CD8-positive, alpha-beta T cell (primary cell): ENCODE measurements at regions of chr13 and their contacts with region 1.

Region 1: GRCh38 chr13:25971459-25972145 is 80.2 kb downstream of the SHISA2 start:
- DNase-seq: peak in 7 of 9 experiments; percentile 6 to 79 (median 67)
- ATAC-seq: peak; percentile 88
- H3K4me3 ChIP-seq: no peak overlapping the region
- H3K4me3 Mint-ChIP-seq: peak overlapping the region; percentile 32
- H3K27ac ChIP-seq: peak overlapping the region; percentile 14 to 40
- H3K27ac Mint-ChIP-seq: peak overlapping the region; percentile 88
- H3K4me1 ChIP-seq: peaks cover 48% of the 10 kb centered on the region
- H3K4me1 Mint-ChIP-seq: peaks cover 54% of the 10 kb centered on the region
- H3K27me3 ChIP-seq: no peaks in the 10 kb centered on the region
- H3K27me3 Mint-ChIP-seq: no peaks in the 10 kb centered on the region
- CTCF ChIP-seq: no peak

Region 2: DNA sequence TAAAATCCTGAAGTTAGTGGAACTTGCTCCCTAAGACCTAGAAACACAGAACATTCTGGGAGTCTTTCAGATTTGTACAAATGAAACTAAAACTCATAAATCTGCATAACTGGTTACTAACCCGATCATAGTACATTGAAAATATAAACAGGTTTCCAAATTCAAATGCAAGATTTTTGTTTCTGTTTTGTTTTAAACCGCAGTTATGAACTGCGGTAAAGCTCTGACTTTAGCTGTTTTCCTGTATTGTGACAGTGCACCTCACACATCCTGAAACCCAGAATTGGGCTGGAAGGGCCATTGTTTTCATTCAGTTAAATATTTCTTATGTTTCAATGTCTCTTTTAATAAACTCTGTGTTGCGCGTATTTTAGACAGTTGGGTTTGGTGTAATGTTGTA is 124.5 kb before region 1 on chr13:
- CTCF ChIA-PET with region 1: no interaction called
- POLR2A ChIA-PET with region 1: no interaction called
- intact Hi-C with region 1: loop called in 1 of 2 experiments (anchors 5 kb)
- DNase-seq: peak in 2 of 9 experiments; percentile 41 to 70
- ATAC-seq: peak; percentile 84
- H3K4me3 ChIP-seq: peak overlapping the region in 1 of 2 experiments; percentile 5
- H3K4me3 Mint-ChIP-seq: peak overlapping the region; percentile 68
- H3K27ac ChIP-seq: peak overlapping the region in 1 of 2 experiments; percentile 44
- H3K27ac Mint-ChIP-seq: peak overlapping the region; percentile 85
- H3K4me1 ChIP-seq: peaks cover 16% of the 10 kb centered on the region
- H3K4me1 Mint-ChIP-seq: peaks cover 34% of the 10 kb centered on the region
- H3K27me3 ChIP-seq: no peaks in the 10 kb centered on the region
- H3K27me3 Mint-ChIP-seq: peaks cover 2% of the 10 kb centered on the region
- CTCF ChIP-seq: no peak

Region 3: DNA sequence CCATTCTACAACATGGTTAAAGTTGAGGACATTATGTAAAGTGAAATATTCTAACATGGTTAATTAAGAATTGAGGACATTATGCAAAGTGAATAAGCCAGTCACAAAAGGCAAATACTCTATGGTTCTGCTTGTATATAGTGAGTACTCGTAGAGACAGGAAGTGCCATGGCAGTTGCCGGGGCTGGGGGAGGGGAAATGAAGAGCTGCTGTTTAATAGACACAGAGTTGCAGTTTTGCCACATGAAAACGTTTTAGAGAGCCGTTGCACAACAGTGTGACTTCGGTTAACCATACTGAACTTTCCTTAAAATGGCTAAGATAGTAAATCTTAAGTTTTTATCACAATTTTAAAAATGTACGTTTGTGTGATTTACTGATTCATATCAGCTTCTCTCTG is 96.7 kb before region 1 on chr13:
- CTCF ChIA-PET with region 1: no interaction called
- POLR2A ChIA-PET with region 1: interaction called, 3 read pairs
- intact Hi-C with region 1: loop called in 1 of 2 experiments (anchors 5 kb)
- DNase-seq: peak; percentile 35 to 82 (median 66)
- ATAC-seq: peak; percentile 91
- H3K4me3 ChIP-seq: peak overlapping the region in 1 of 2 experiments; percentile 3
- H3K4me3 Mint-ChIP-seq: peak overlapping the region; percentile 30
- H3K27ac ChIP-seq: peak overlapping the region; percentile 15 to 60
- H3K27ac Mint-ChIP-seq: peak overlapping the region; percentile 83
- H3K4me1 ChIP-seq: peaks cover 53% of the 10 kb centered on the region
- H3K4me1 Mint-ChIP-seq: peaks cover 81% of the 10 kb centered on the region
- H3K27me3 ChIP-seq: no peaks in the 10 kb centered on the region
- H3K27me3 Mint-ChIP-seq: no peaks in the 10 kb centered on the region
- CTCF ChIP-seq: no peak

Region 4: DNA sequence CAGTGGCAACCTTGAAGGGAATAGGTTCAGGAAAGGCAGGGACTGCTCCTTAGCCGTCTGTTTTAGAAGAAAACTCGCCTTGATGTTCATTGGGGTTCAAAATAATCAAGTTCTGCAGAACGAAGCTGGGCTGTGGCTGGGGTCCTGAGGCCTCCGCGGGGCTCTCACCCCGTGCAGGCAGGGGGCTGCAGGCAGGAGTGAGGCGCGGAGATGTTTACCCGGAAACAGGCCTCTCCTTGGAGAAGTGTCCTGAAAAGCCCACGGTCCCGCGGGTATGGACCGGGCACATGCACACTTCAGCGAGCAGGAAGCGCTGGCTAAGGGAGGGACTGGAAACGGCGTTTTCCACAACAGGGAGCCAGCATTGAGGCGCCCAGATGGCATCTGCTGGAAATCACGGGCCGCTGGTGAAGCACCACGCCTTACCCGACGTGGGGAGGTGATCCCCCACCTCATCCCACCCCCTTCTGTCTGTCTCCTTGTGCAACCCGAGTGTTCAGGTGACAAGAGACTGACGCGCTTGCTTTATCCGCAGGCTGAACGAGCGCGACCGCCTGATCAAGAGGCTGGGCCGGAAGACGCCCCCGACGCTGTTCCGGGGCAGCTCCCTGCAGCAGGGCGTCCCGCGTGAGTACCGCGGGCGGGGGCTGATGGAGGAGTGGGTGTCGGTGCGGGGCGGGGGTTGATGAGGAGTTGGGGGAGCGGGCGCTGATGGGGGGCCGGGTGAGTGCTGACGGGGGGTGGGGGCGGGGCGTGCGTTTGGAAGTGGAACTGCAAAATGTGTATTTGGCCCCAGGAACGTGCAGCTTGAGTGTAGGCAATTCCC is 40.6 kb after region 1 on chr13:
- CTCF ChIA-PET with region 1: no interaction called
- POLR2A ChIA-PET with region 1: interaction called, 3 read pairs
- intact Hi-C with region 1: loop called in 1 of 2 experiments (anchors 5 kb)
- DNase-seq: peak; percentile 43 to 91 (median 77)
- ATAC-seq: peak; percentile 96
- H3K4me3 ChIP-seq: peak overlapping the region; percentile 62 to 64
- H3K4me3 Mint-ChIP-seq: peak overlapping the region; percentile 84
- H3K27ac ChIP-seq: peak overlapping the region; percentile 83 to 86
- H3K27ac Mint-ChIP-seq: peak overlapping the region; percentile 97
- H3K4me1 ChIP-seq: peaks cover 21% of the 10 kb centered on the region
- H3K4me1 Mint-ChIP-seq: peaks cover 51% of the 10 kb centered on the region
- H3K27me3 ChIP-seq: no peaks in the 10 kb centered on the region
- H3K27me3 Mint-ChIP-seq: no peaks in the 10 kb centered on the region
- CTCF ChIP-seq: no peak

Region 5: DNA sequence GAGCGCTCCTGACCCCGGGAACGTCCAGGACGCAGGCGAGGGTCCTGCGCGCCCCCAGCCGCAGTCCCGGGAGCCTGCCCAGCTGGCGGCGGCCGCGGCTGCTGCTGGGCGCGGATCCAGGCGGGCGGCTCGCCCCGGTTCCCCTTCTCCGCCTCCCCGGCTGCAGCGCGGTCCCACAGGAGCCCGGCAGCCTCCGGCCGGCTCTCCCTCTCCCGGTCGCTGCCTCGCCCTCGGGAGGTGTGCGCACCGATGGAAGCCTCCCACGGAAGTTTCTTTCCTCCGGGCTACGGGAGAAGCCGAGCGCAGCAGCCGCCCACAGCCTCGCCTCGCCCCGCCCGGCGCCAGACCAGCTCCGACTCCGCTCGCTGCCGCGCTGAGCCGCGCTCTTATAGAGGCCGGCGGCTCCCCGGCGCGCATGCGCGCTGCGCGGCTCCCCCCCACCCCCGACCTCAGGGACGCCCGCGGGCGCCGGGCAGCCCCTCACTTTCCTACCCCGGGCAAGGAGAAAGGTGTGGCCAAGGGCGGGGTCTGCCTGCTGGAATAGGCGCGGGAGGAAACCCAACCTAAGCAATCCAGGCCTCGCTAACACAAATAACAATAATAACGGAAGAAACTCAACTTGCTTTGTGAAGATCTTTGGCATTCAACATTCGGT is 80.2 kb after region 1 on chr13 and contains the start of gene SHISA2:
- CTCF ChIA-PET with region 1: no interaction called
- POLR2A ChIA-PET with region 1: no interaction called
- intact Hi-C with region 1: loop called in 1 of 2 experiments (anchors 5 kb)
- DNase-seq: peak in 4 of 9 experiments; percentile 61 to 74 (median 70)
- ATAC-seq: peak; percentile 69
- H3K4me3 ChIP-seq: peak within 1 kb of the TSS; percentile 42
- H3K4me3 Mint-ChIP-seq: peak within 1 kb of the TSS; percentile 81
- H3K27ac ChIP-seq: no peak within 1 kb of the TSS
- H3K27ac Mint-ChIP-seq: peak within 1 kb of the TSS; percentile 45
- H3K4me1 ChIP-seq: peaks cover 28% of the 10 kb centered on the region
- H3K4me1 Mint-ChIP-seq: peaks cover 15% of the 10 kb centered on the region
- H3K27me3 ChIP-seq: peaks cover 7 to 9% of the 10 kb centered on the region in 2 experiments
- H3K27me3 Mint-ChIP-seq: peaks cover 20% of the 10 kb centered on the region
- CTCF ChIP-seq: no peak
- total RNA-seq, gene SHISA2: 6.4 to 6.8 TPM